CD4-positive, alpha-beta memory T cell (primary cell): ENCODE measurements at regions of chr14 and their contacts with region 1.

Region 1: DNA sequence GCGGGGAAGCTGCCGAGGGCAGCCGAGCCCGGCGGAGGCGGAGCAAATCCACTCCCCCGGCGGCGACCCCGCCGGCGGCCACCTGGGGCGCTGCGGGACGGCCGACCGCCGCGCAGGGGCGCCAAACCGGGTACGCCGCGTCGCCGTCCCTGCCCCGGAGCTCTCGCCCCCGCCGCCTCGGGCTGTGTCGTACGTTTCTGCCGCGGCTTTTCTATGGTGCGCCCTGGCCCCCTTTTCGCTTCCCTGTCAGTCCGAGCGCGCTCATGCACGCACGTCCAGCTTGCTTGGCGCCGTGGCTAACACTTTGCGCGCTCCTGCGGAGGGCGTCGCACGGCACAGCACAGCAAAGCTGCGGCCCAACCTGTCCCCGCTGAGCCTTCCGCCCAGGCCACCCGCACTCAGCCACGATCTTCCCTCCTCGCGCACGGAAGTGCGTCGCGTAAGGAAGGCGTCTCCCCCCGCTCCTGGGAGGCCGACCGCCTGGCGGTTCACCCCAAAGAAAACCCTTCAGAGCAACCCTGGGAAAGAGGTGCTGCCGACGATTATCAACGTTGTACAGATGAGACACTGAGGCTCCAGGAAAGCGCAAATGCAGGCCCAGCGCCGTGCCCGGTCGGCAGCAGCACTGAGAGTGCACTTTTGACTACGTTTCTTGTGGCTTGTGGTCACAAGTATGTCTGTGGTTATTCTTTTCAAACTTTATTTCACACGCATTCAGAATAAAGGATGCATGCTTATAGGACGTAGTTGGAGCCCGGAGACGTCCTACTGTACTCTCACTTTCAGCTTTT is at the start of gene HECTD1:
- DNase-seq: peak; percentile 91 to 94 (median 92)
- H3K4me3 ChIP-seq: peak within 1 kb of the TSS; percentile 76 to 79
- H3K4me3 Mint-ChIP-seq: peak within 1 kb of the TSS; percentile 91 to 98 (median 95)
- H3K27ac ChIP-seq: peak within 1 kb of the TSS; percentile 97
- H3K27ac Mint-ChIP-seq: peak within 1 kb of the TSS; percentile 99 to 100 (median 99)
- H3K4me1 ChIP-seq: peaks cover 46% of the 10 kb centered on the region
- H3K4me1 Mint-ChIP-seq: peaks cover 43 to 77% (median 55%) of the 10 kb centered on the region in 4 donors
- H3K27me3 ChIP-seq: no peaks in the 10 kb centered on the region
- H3K27me3 Mint-ChIP-seq: no peaks in the 10 kb centered on the region
- total RNA-seq, gene HECTD1: 157 to 170 TPM

Region 2: GRCh38 chr14:30558675-30559555 is 649.0 kb before region 1 on chr14 and contains the start of gene G2E3:
- CTCF ChIA-PET with region 1: no interaction called
- POLR2A ChIA-PET with region 1: interaction called, 4 read pairs
- intact Hi-C with region 1: loop called (anchors 2 kb)
- DNase-seq: peak; percentile 83 to 85 (median 84)
- H3K4me3 ChIP-seq: peak within 1 kb of the TSS; percentile 93 to 97
- H3K4me3 Mint-ChIP-seq: peak within 1 kb of the TSS; percentile 99 to 100 (median 100)
- H3K27ac ChIP-seq: peak within 1 kb of the TSS; percentile 82
- H3K27ac Mint-ChIP-seq: peak within 1 kb of the TSS; percentile 91 to 99 (median 99)
- H3K4me1 ChIP-seq: peaks cover 28% of the 10 kb centered on the region
- H3K4me1 Mint-ChIP-seq: peaks cover 24 to 49% (median 32%) of the 10 kb centered on the region in 4 donors
- H3K27me3 ChIP-seq: no peaks in the 10 kb centered on the region
- H3K27me3 Mint-ChIP-seq: no peaks in the 10 kb centered on the region
- total RNA-seq, gene G2E3: 26.4 to 32.0 TPM

Region 3: DNA sequence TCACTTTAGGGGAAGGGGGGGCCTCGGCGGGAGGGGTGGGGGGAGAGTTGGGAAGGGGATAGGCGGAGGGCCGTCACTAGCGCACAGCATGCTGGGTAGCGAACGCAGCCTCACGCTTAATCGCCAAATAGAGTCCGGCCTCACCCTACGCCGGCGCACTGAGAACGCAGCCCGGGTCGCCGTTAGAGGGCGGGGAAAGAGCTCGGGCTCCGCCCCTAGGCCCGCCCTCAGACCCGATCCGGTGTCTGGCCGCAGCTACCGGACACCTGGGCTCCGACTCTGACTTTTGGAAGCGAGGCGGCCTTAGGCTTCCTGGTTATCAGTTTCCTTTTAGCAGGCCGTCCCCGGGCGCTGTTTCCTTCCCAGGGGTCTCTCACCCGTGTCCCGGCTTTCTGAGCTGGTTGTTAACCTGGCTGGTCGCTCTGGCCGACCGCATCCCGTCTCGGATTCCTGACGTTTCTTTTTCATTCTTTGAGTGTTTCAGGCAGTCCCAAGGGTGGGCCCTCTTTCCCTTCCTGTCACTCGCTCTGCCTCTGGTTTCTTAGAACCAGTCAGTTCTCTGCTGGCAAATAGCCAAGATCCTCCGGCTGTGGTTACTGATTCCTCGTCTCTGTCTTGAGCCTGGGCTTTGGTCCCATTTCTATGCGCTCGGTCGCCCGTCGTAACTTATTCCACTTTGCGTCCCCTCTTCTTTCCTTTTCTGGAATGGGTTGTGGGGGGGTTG is 181.4 kb before region 1 on chr14:
- CTCF ChIA-PET with region 1: interaction called, 5 read pairs
- POLR2A ChIA-PET with region 1: interaction called, 68 read pairs
- intact Hi-C with region 1: loop called (anchors 1 kb)
- DNase-seq: peak; percentile 85 to 91 (median 87)
- H3K4me3 ChIP-seq: peak overlapping the region; percentile 66 to 87
- H3K4me3 Mint-ChIP-seq: peak overlapping the region; percentile 93 to 100 (median 98)
- H3K27ac ChIP-seq: peak overlapping the region; percentile 95
- H3K27ac Mint-ChIP-seq: peak overlapping the region; percentile 96 to 99 (median 99)
- H3K4me1 ChIP-seq: peaks cover 36% of the 10 kb centered on the region
- H3K4me1 Mint-ChIP-seq: peaks cover 39 to 64% (median 48%) of the 10 kb centered on the region in 4 donors
- H3K27me3 ChIP-seq: no peaks in the 10 kb centered on the region
- H3K27me3 Mint-ChIP-seq: no peaks in the 10 kb centered on the region

Region 4: DNA sequence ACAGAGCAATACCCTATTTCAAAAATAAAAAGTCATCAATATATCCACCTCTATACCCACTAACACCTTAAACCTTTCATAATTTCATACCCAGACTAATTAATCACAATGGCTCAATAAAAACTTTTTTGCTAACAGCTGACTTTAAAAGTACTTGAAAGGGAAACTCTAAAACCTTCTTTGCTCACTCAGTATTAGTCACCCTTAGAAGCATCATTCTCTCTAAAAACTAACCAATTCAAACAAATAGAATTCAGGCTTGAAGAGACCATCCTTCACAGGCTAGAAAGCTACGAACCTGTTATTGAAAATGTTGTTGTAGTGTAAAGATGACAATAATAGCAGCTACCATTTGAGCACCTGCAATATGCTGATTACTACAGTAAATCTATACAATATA is 37.5 kb before region 1 on chr14:
- CTCF ChIA-PET with region 1: interaction called, 3 read pairs
- POLR2A ChIA-PET with region 1: interaction called, 15 read pairs
- intact Hi-C with region 1: no loop called
- DNase-seq: no peak
- H3K4me3 ChIP-seq: no peak overlapping the region
- H3K4me3 Mint-ChIP-seq: no peak overlapping the region
- H3K27ac ChIP-seq: no peak overlapping the region
- H3K27ac Mint-ChIP-seq: peak overlapping the region in 2 of 7 donors; percentile 18 to 65
- H3K4me1 ChIP-seq: no peaks in the 10 kb centered on the region
- H3K4me1 Mint-ChIP-seq: peaks cover 0 to 6% (median 0%) of the 10 kb centered on the region in 4 donors
- H3K27me3 ChIP-seq: no peaks in the 10 kb centered on the region
- H3K27me3 Mint-ChIP-seq: no peaks in the 10 kb centered on the region

Region 5: GRCh38 chr14:31297701-31298344 is 89.9 kb after region 1 on chr14:
- CTCF ChIA-PET with region 1: no interaction called
- POLR2A ChIA-PET with region 1: interaction called, 15 read pairs
- intact Hi-C with region 1: loop called (anchors 5 kb)
- DNase-seq: no peak
- H3K4me3 ChIP-seq: no peak overlapping the region
- H3K4me3 Mint-ChIP-seq: no peak overlapping the region
- H3K27ac ChIP-seq: no peak overlapping the region
- H3K27ac Mint-ChIP-seq: peak overlapping the region in 2 of 7 donors; percentile 15 to 55
- H3K4me1 ChIP-seq: no peaks in the 10 kb centered on the region
- H3K4me1 Mint-ChIP-seq: no peaks in the 10 kb centered on the region
- H3K27me3 ChIP-seq: no peaks in the 10 kb centered on the region
- H3K27me3 Mint-ChIP-seq: no peaks in the 10 kb centered on the region

Region 6: DNA sequence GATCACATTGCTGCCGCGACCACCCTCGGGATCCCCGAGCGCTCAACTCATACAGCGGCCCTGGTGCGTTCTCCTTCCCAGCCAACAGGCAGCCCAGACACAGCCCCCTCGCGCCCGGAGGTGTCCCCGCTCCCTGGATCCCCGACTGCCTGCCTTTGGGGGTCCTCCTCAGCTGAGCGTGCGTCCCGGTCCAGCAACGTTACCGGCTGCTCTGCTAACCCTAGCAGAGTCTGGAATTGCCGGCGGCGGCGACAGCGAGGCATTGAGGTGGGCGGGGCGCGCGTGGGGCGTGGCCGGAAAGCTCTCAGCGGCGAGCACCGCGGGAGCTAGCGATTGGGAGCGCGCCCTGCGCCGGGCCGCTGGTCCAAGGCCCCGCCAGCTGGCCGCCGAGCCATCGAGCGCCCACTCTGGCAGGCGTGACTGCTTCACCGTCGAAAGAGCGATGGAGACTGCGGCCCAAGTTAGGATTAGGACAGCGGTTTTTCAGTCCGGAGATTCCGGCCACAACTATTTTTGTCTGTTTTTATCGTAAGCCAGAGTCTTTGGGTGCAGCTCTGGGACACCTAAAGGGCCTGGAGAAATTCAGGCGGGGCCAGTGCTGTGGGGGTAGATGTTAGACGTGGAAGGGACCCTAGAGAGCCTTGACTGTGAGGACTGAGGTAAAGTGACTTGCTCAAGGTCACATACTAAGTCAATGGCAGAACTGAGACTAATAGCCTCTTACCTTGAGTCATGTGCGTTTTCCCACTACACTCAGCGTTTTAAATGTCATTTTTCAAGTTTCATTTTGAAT is 212.6 kb after region 1 on chr14 and contains the start of gene HEATR5A:
- CTCF ChIA-PET with region 1: interaction called, 4 read pairs
- POLR2A ChIA-PET with region 1: interaction called, 30 read pairs
- intact Hi-C with region 1: loop called (anchors 1 kb)
- DNase-seq: peak; percentile 90 to 92 (median 91)
- H3K4me3 ChIP-seq: peak within 1 kb of the TSS; percentile 97 to 99
- H3K4me3 Mint-ChIP-seq: peak within 1 kb of the TSS; percentile 92 to 100 (median 98)
- H3K27ac ChIP-seq: peak within 1 kb of the TSS; percentile 66
- H3K27ac Mint-ChIP-seq: peak within 1 kb of the TSS; percentile 80 to 99 (median 96)
- H3K4me1 ChIP-seq: peaks cover 17% of the 10 kb centered on the region
- H3K4me1 Mint-ChIP-seq: peaks cover 11 to 36% (median 20%) of the 10 kb centered on the region in 4 donors
- H3K27me3 ChIP-seq: no peaks in the 10 kb centered on the region
- H3K27me3 Mint-ChIP-seq: no peaks in the 10 kb centered on the region
- total RNA-seq, gene HEATR5A: 15.1 to 16.4 TPM

Region 7: GRCh38 chr14:32202998-32203882 is 995.3 kb after region 1 on chr14 and contains the start of gene RNU6-8:
- CTCF ChIA-PET with region 1: no interaction called
- POLR2A ChIA-PET with region 1: no interaction called
- intact Hi-C with region 1: loop called (anchors 2 kb)
- DNase-seq: peak; percentile 89 to 95 (median 94)
- H3K4me3 ChIP-seq: peak within 1 kb of the TSS; percentile 50 to 68
- H3K4me3 Mint-ChIP-seq: peak within 1 kb of the TSS; percentile 90 to 96 (median 93)
- H3K27ac ChIP-seq: peak within 1 kb of the TSS; percentile 94
- H3K27ac Mint-ChIP-seq: peak within 1 kb of the TSS; percentile 96 to 100 (median 99)
- H3K4me1 ChIP-seq: peaks cover 23% of the 10 kb centered on the region
- H3K4me1 Mint-ChIP-seq: peaks cover 22 to 41% (median 28%) of the 10 kb centered on the region in 4 donors
- H3K27me3 ChIP-seq: no peaks in the 10 kb centered on the region
- H3K27me3 Mint-ChIP-seq: peaks cover 0 to 2% of the 10 kb centered on the region in 2 donors
- total RNA-seq, gene RNU6-8: not detected